ENCODE measurements at regions of chr1 and their contacts with region 1.

Region 1: GRCh38 chr1:156090822-156091188 is 8.5 kb upstream of the MEX3A start:
- DNase-seq: peak; percentile 95
- H3K4me3 Mint-ChIP-seq: no peak overlapping the region
- H3K27ac Mint-ChIP-seq: no peak overlapping the region
- H3K4me1 Mint-ChIP-seq: peaks cover 7% of the 10 kb centered on the region
- H3K27me3 Mint-ChIP-seq: peaks cover 19% of the 10 kb centered on the region

Region 2: GRCh38 chr1:156114101-156114916 is 23.5 kb after region 1 on chr1 and contains the start of gene LMNA:
- CTCF ChIA-PET with region 1: interaction called, 34 read pairs
- intact Hi-C with region 1: no loop called
- DNase-seq: peak; percentile 91
- H3K4me3 Mint-ChIP-seq: peak within 1 kb of the TSS; percentile 86
- H3K27ac Mint-ChIP-seq: peak within 1 kb of the TSS; percentile 50
- H3K4me1 Mint-ChIP-seq: peaks cover 32% of the 10 kb centered on the region
- H3K27me3 Mint-ChIP-seq: peaks cover 22% of the 10 kb centered on the region
- total RNA-seq, gene LMNA: 62.1 to 62.6 TPM

Region 3: DNA sequence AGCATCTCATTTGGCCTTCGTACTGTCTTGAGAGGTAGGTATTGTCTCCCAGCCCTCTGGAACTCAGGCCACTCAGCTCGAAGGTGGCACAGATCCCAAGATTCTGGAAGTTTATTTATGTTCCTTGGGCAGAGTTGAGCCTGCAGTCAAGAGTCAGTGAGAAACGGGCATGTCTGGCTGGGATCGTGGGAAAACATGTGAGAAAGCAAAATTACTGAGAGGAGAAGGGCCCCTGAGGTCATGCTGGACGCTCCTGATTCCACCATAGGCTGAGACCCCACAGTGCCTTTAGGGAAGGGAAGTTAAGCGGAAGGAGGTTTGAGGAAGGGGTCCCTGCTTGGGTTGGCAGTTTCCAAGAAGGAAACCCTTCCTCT is 50.1 kb after region 1 on chr1:
- CTCF ChIA-PET with region 1: interaction called, 737 read pairs
- intact Hi-C with region 1: loop called (anchors 1 kb)
- DNase-seq: no peak
- H3K4me3 Mint-ChIP-seq: no peak overlapping the region
- H3K27ac Mint-ChIP-seq: no peak overlapping the region
- H3K4me1 Mint-ChIP-seq: peaks cover 4% of the 10 kb centered on the region
- H3K27me3 Mint-ChIP-seq: no peaks in the 10 kb centered on the region

Region 4: GRCh38 chr1:156295391-156295947 is 204.7 kb after region 1 on chr1 and contains the start of gene GLMP:
- CTCF ChIA-PET with region 1: no interaction called
- intact Hi-C with region 1: no loop called
- DNase-seq: peak; percentile 77
- H3K4me3 Mint-ChIP-seq: peak within 1 kb of the TSS; percentile 84
- H3K27ac Mint-ChIP-seq: no peak within 1 kb of the TSS
- H3K4me1 Mint-ChIP-seq: peaks cover 18% of the 10 kb centered on the region
- H3K27me3 Mint-ChIP-seq: no peaks in the 10 kb centered on the region
- total RNA-seq, gene GLMP: 10.0 to 10.1 TPM

Region 5: DNA sequence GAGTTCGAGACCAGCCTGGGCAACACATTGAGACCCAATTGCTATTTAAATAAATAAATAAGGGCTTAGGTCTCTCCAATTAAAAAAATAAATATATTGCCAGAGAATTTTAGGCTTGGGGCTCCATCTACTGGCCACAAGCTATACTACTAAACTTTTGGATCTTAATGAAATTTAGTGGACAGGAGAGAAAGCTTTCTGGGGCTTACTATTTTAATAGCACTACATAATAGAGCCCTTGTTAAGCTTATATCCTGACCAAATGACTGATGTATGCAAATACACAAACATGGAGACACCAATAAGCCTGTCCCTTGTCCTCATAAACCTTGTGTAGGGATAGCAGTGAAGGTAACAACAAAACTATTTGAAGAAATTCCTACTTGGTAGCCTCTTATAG is 228.9 kb after region 1 on chr1:
- CTCF ChIA-PET with region 1: interaction called, 4 read pairs
- intact Hi-C with region 1: loop called (anchors 2 kb)
- DNase-seq: peak; percentile 38
- H3K4me3 Mint-ChIP-seq: no peak overlapping the region
- H3K27ac Mint-ChIP-seq: no peak overlapping the region
- H3K4me1 Mint-ChIP-seq: no peaks in the 10 kb centered on the region
- H3K27me3 Mint-ChIP-seq: no peaks in the 10 kb centered on the region

Measured in activated naive CD4-positive, alpha-beta T cell treated with anti-CD3 and anti-CD28 coated beads for 36 hours (primary cell).